Heart left ventricle (tissue), 16 donors: ENCODE measurements at regions of chr9 and their contacts with region 1.

Region 1: DNA sequence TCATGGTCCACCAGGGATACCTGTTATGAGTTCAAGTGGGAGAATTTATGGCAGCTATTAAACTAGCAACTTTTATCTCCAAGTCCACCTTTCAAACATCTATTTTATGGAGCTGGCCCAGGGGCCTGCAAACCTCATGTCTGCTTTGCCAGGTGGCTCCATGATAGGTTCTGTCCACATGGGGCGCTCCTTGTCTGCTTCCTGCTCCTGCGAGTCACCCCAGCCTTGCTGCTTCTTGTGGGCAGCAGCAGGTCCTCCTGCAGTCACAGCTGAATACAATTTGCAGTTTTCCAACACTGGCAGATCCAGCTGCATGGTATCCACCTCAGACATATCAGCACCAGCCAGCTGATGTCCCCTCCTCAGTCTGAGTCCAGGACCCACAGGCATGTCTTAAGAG is 39.6 kb upstream of the FRRS1L start:
- DNase-seq: no peak
- ATAC-seq: no peak
- H3K4me3 ChIP-seq: no peak overlapping the region
- H3K27ac ChIP-seq: no peak overlapping the region
- H3K4me1 ChIP-seq: peaks cover 0 to 2% (median 0%) of the 10 kb centered on the region in 12 donors
- H3K27me3 ChIP-seq: no peaks in the 10 kb centered on the region
- CTCF ChIP-seq: no peak
- POLR2A ChIP-seq: no peak

Region 2: DNA sequence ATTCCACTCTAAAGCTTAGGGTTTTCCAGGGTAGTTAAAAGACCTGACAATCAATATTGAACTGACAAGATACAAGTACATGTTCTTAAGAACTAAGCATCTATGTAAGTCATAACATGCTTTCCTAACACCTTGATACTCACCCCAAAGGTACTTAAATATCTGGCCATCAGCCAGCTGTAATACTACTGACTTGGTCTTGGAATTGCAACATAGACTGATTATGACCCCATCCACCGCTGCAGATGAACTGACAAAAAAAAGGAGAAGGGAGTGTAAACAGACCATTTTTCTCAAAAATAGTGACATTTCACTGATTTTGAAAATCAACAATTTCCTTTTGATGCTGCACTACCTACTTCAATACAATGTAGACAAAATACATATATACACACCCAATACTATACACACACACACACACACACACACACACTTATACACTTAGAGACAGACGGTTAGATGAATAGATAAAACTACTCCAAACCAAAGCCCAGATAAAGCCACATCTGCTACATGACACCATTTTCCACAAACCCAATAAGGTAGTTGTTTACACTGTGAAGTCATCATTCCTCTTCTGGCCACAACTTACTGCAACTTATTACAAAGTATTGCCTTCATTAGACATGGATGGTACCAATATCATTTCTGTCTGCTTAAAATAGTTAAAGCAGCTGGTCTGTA is 303.1 kb before region 1 on chr9:
- intact Hi-C with region 1: no loop called
- DNase-seq: no peak
- ATAC-seq: no peak
- H3K4me3 ChIP-seq: no peak overlapping the region
- H3K27ac ChIP-seq: no peak overlapping the region
- H3K4me1 ChIP-seq: no peaks in the 10 kb centered on the region
- H3K27me3 ChIP-seq: no peaks in the 10 kb centered on the region
- CTCF ChIP-seq: no peak
- POLR2A ChIP-seq: no peak

Region 3: GRCh38 chr9:109143881-109144562 is 62.6 kb before region 1 on chr9:
- intact Hi-C with region 1: loop called in 1 of 10 experiments (anchors 10 kb)
- DNase-seq: no peak
- ATAC-seq: no peak
- H3K4me3 ChIP-seq: no peak overlapping the region
- H3K27ac ChIP-seq: no peak overlapping the region
- H3K4me1 ChIP-seq: no peaks in the 10 kb centered on the region
- H3K27me3 ChIP-seq: no peaks in the 10 kb centered on the region
- CTCF ChIP-seq: peak in 2 of 12 donors; percentile 5 to 9
- POLR2A ChIP-seq: no peak

Region 4: DNA sequence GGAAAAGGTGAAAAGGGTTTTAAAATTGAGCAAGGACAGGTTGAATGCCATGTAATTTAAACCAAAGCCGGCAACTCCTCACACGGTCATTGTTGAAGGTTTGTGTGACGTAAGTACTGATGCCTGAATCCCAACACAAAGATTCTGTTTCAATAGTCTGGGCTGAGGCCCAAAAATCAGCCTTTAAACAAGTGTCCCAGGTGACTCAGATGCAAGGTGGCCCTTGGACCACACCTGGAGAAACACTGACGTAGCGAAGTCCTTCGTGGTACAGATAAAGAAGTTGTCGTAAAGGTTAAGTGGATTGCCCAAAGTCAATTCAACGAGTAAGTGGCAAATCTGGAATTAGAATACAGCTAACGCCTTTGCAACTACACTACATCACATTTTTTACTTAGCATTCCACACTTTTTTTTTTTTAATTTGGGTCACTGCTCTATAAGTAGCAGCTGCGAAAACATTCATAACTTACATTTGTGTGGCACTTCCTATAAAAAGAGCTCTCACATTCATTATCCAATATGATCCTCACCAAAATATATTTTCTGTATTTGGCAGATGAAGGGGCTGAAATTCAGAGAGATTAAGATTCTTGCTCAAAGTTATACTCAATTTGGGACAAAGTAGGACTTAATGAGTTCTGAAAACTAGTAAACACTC is 1720.3 kb after region 1 on chr9:
- intact Hi-C with region 1: no loop called
- DNase-seq: no peak
- ATAC-seq: no peak
- H3K4me3 ChIP-seq: no peak overlapping the region
- H3K27ac ChIP-seq: no peak overlapping the region
- H3K4me1 ChIP-seq: no peaks in the 10 kb centered on the region
- H3K27me3 ChIP-seq: no peaks in the 10 kb centered on the region
- CTCF ChIP-seq: no peak
- POLR2A ChIP-seq: no peak